ENCODE measurements at regions of chr19 and their contacts with region 1.

Region 1: GRCh38 chr19:3035542-3036118 is 6.5 kb upstream of the TLE2 start:
- DNase-seq: peak; percentile 98 to 99
- H3K4me3 ChIP-seq: peak overlapping the region; percentile 46
- H3K4me3 Mint-ChIP-seq: peak overlapping the region; percentile 90
- H3K27ac Mint-ChIP-seq: peak overlapping the region; percentile 94
- H3K4me1 ChIP-seq: peaks cover 26% of the 10 kb centered on the region
- H3K4me1 Mint-ChIP-seq: peaks cover 23% of the 10 kb centered on the region
- H3K27me3 ChIP-seq: no peaks in the 10 kb centered on the region
- H3K27me3 Mint-ChIP-seq: no peaks in the 10 kb centered on the region
- CTCF ChIP-seq: no peak

Region 2: DNA sequence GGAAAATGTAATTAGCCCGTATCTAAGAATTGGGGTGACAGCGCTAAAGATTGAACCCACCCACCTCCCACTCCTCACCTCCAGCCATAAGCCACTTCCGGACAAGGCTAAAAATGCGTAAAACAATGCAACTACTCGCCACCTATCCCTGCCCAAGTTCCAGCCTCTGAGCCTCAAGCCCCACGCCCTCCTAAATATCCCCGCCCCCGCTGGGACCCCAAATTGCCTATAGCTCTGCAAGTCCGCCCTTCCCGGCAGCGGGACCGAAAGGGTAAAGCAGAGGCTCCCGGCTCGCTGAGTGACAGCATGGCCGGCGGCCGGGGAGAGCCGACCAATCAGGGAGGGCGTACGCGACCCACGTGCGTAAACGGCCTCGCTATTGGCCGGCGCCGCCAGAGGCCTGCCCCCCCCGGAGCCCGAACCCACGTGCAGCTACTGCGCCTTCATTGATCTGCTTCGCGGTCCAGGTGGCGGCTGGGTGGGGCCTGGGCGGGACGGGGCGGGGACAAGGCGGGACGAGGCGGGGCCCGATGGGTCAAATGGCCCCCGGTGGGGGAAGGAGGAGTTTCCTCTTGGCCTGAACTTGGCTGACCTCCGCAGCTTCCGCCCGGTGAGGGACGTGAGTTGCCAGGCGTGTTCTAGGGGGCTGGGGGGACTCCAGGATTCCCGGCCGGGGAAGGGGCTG is 58.5 kb before region 1 on chr19 and contains the start of gene TLE6:
- CTCF ChIA-PET with region 1: interaction called, 3 read pairs
- POLR2A ChIA-PET with region 1: interaction called, 6 read pairs
- intact Hi-C with region 1: loop called (anchors 1 kb)
- DNase-seq: peak; percentile 97
- H3K4me3 ChIP-seq: peak within 1 kb of the TSS; percentile 52
- H3K4me3 Mint-ChIP-seq: peak within 1 kb of the TSS; percentile 85
- H3K27ac Mint-ChIP-seq: peak within 1 kb of the TSS; percentile 72
- H3K4me1 ChIP-seq: peaks cover 16% of the 10 kb centered on the region; the same call in 1 of the 2 replicates
- H3K4me1 Mint-ChIP-seq: no peaks in the 10 kb centered on the region
- H3K27me3 ChIP-seq: no peaks in the 10 kb centered on the region
- H3K27me3 Mint-ChIP-seq: no peaks in the 10 kb centered on the region
- CTCF ChIP-seq: no peak
- total RNA-seq, gene TLE6: 1.4 and 1.9 TPM in 2 replicates